Endothelial cell of umbilical vein (primary cell): ENCODE measurements at regions of chr10 and their contacts with region 1.

Region 1: GRCh38 chr10:49177391-49178355 is 10.5 kb downstream of the TMEM273 start:
- DNase-seq: peak; percentile 66
- H3K4me3 ChIP-seq: no peak overlapping the region
- H3K27ac ChIP-seq: peak overlapping the region; percentile 78
- H3K4me1 ChIP-seq: peaks cover 9% of the 10 kb centered on the region
- H3K27me3 ChIP-seq: no peaks in the 10 kb centered on the region
- CTCF ChIP-seq: no peak
- POLR2A ChIP-seq: no peak

Region 2: DNA sequence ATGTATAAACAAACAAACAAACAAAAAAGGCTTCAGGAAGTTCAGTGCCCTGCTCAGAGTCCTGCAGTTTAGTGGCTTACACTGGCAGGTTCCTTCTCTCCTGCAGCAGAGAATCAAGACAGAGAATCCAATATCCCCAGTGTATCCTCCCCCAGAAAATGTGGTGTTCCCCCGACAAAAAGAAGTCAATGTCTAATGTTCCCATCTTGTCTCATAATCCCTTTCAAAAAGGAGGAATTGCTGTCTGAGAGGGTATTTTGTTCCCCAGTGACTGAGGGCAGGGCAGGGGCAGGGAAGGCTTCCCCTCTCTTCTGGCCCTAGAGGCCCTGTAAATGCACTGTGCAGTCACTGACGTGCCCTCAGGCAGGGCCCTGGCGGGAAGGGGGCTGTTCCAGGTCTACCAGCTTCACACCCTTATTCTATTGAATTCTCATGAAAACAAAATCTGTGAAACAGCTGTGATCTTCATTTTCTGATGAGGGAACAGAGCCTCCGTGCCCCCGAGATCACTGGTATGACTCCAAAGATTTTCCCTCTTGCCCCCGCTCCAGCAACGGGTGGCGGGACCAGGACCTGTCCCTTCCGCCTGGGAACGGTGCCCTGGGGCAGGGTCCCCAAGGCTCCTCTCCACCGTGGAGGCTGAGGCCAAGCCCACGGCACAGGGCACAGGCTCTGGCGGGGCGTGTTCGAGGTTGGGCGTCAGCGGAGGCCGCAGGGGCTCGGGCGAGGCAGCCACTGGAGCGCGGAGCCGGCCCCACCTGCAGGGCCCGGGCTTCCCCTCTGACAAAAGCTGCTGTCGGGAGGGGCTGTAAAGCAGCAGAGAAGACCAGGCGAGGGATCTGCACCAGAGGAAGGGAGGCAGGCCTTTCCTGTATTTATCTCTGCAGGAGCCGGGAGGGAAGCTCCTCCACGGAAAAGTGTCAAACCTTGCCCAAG is 506.4 kb before region 1 on chr10:
- CTCF ChIA-PET with region 1: no interaction called
- POLR2A ChIA-PET with region 1: no interaction called
- dilution Hi-C with region 1: no loop called
- intact Hi-C with region 1: no loop called
- DNase-seq: no peak
- H3K4me3 ChIP-seq: no peak overlapping the region
- H3K27ac ChIP-seq: no peak overlapping the region
- H3K4me1 ChIP-seq: no peaks in the 10 kb centered on the region
- H3K27me3 ChIP-seq: peaks cover 0 to 10% of the 10 kb centered on the region in 2 experiments
- CTCF ChIP-seq: no peak
- POLR2A ChIP-seq: no peak

Region 3: GRCh38 chr10:49164559-49165188 is 13.0 kb before region 1 on chr10:
- CTCF ChIA-PET with region 1: interaction called, 13 read pairs
- POLR2A ChIA-PET with region 1: no interaction called
- dilution Hi-C with region 1: no loop called
- intact Hi-C with region 1: no loop called
- DNase-seq: peak; percentile 56
- H3K4me3 ChIP-seq: no peak overlapping the region
- H3K27ac ChIP-seq: no peak overlapping the region
- H3K4me1 ChIP-seq: no peaks in the 10 kb centered on the region
- H3K27me3 ChIP-seq: no peaks in the 10 kb centered on the region
- CTCF ChIP-seq: peak; percentile 52 to 81
- POLR2A ChIP-seq: no peak